SK-N-SH (cell line): ENCODE measurements at regions of chr17 and their contacts with region 1.

Region 1: GRCh38 chr17:42120770-42121769 is at the start of gene KAT2A:
- DNase-seq: peak; percentile 97
- H3K4me3 ChIP-seq: peak within 1 kb of the TSS; percentile 49 to 71
- H3K27ac ChIP-seq: peak within 1 kb of the TSS in 1 of 2 experiments; percentile 64; a peak in 2 of 4 replicates
- H3K4me1 ChIP-seq: peaks cover 0 to 11% of the 10 kb centered on the region in 2 experiments; a peak in 1 of 4 replicates
- H3K27me3 ChIP-seq: no peaks in the 10 kb centered on the region
- CTCF ChIP-seq: no peak
- EP300 ChIP-seq: no peak
- RAD21 ChIP-seq: no peak
- polyA plus RNA-seq, gene KAT2A: 45.1 and 58.6 TPM in 2 replicates

Region 2: GRCh38 chr17:41966463-41967140 is 154.5 kb before region 1 on chr17 and contains the start of gene CNP:
- CTCF ChIA-PET with region 1: interaction called, 32 read pairs
- POLR2A ChIA-PET with region 1: no interaction called
- DNase-seq: peak; percentile 99
- H3K4me3 ChIP-seq: peak within 1 kb of the TSS; percentile 93 to 96
- H3K27ac ChIP-seq: peak within 1 kb of the TSS; percentile 65 to 91
- H3K4me1 ChIP-seq: peaks cover 5 to 34% of the 10 kb centered on the region in 2 experiments; a peak in 2 of 4 replicates
- H3K27me3 ChIP-seq: no peaks in the 10 kb centered on the region
- CTCF ChIP-seq: no peak
- EP300 ChIP-seq: no peak
- RAD21 ChIP-seq: no peak
- polyA plus RNA-seq, gene CNP: 44.8 and 54.8 TPM in 2 replicates